Spleen (tissue), 13 donors: ENCODE measurements at regions of chr12 and their contacts with region 1.

Region 1: GRCh38 chr12:130044991-130045621 is 117.2 kb upstream of the FZD10 start:
- DNase-seq: no peak
- H3K4me3 ChIP-seq: no peak overlapping the region
- H3K27ac ChIP-seq: peak overlapping the region in 3 of 8 donors; percentile 17 to 52 (median 46)
- H3K4me1 ChIP-seq: peaks cover 0 to 5% (median 0%) of the 10 kb centered on the region in 6 donors
- H3K27me3 ChIP-seq: peaks cover 0 to 74% (median 25%) of the 10 kb centered on the region in 7 donors
- CTCF ChIP-seq: no peak
- POLR2A ChIP-seq: no peak

Region 2: GRCh38 chr12:130097798-130098291 is 52.7 kb after region 1 on chr12:
- intact Hi-C with region 1: no loop called
- DNase-seq: no peak
- H3K4me3 ChIP-seq: no peak overlapping the region
- H3K27ac ChIP-seq: no peak overlapping the region
- H3K4me1 ChIP-seq: no peaks in the 10 kb centered on the region
- H3K27me3 ChIP-seq: peaks cover 0 to 25% (median 0%) of the 10 kb centered on the region in 7 donors
- CTCF ChIP-seq: no peak
- POLR2A ChIP-seq: no peak

Region 3: GRCh38 chr12:130335517-130336392 is 290.6 kb after region 1 on chr12:
- intact Hi-C with region 1: loop called (anchors 5 kb)
- DNase-seq: no peak
- H3K4me3 ChIP-seq: no peak overlapping the region
- H3K27ac ChIP-seq: no peak overlapping the region
- H3K4me1 ChIP-seq: peaks cover 0 to 9% (median 0%) of the 10 kb centered on the region in 6 donors
- H3K27me3 ChIP-seq: peaks cover 0 to 44% (median 16%) of the 10 kb centered on the region in 7 donors
- CTCF ChIP-seq: peak in 10 of 11 experiments; percentile 6 to 65 (median 54)
- POLR2A ChIP-seq: no peak